ENCODE measurements at regions of chr16 and their contacts with region 1.

Region 1: GRCh38 chr16:77171745-77172635 is 19.0 kb upstream of the MON1B start:
- DNase-seq: no peak
- ATAC-seq: peak; percentile 69

Region 2: GRCh38 chr16:75794426-75794825 is 1377.6 kb before region 1 on chr16:
- intact Hi-C with region 1: loop called (anchors 5 kb)
- DNase-seq: no peak
- ATAC-seq: no peak

Region 3: DNA sequence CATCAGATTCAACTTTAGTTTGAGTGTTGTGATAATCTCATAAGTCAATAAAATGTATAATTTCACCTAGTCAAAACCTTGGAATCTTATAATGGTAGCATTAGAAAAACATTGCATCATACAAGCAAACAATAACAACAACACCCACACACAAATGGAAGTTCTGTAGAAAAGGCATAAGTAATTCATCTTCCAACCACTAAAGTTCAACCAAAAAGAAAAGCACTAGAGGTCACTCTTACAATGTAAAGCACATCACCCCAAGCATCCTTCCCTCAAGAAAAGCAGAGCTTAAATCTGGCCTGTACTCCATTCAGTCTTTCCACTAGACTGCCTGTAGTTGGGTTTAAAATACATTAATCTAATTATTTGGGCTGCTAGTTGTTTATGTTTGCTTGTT is 893.0 kb before region 1 on chr16:
- intact Hi-C with region 1: loop called (anchors 10 kb)
- DNase-seq: no peak
- ATAC-seq: no peak

Region 4: GRCh38 chr16:77090062-77090461 is 81.9 kb before region 1 on chr16:
- intact Hi-C with region 1: no loop called
- DNase-seq: no peak
- ATAC-seq: no peak